ENCODE measurements at regions of chr22 and their contacts with region 1.

Region 1: DNA sequence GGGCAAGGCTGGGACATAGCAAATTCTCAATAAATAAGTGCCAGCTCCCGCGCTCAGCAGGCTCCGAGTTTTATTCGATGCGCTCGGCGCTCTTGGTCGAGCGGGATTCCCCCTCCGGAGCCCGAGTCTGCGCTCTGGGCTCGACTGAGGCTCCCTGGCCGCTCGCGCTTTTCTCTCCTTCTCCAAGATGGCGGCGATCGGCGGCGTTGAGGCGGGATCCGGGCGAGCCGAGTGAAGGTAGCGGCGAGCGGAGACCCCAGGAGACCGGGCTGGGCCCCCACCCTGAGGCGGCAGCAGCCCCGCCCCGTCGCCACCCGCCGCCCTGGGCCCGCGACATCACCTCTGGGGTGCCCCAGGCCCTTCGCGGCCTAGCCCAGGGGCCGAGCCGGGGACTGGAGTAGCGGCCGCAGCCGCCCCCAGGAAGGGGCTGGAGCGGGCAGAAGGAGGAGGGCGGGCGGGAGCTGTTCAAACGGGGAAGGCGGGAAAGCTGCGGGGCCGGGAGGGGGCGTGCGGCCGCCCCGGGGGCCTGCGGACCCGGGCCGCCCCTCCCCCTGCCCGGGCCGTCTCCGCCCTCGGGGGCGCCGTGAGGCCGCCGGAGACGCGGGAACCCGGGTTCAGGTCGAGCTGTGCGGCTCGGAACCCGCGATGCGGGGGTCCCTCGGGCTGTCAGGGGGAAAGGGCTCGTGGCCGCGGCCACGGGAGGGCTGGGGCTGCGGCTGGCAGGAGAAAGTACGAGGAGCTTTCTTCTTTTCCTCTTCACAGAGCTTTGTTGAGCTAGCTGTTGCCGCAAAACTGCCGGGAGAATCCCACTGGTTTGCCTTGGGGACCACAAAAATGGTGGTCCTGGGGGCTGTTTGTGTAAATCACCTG is at the start of gene HMGXB4:
- DNase-seq: peak; percentile 38
- ATAC-seq: peak; percentile 94
- H3K4me3 ChIP-seq: peak within 1 kb of the TSS; percentile 73
- H3K27ac ChIP-seq: peak within 1 kb of the TSS; percentile 74
- H3K4me1 ChIP-seq: 0 out of 2 replicates have a peak, but pooled peaks cover 5% of the 10 kb centered on the region
- H3K27me3 ChIP-seq: no peaks in the 10 kb centered on the region
- CTCF ChIP-seq: no peak
- EP300 ChIP-seq: no peak
- POLR2A ChIP-seq: peak; percentile 75
- RAD21 ChIP-seq: no peak
- polyA plus RNA-seq, gene HMGXB4: 32.1 to 44.5 TPM

Region 2: DNA sequence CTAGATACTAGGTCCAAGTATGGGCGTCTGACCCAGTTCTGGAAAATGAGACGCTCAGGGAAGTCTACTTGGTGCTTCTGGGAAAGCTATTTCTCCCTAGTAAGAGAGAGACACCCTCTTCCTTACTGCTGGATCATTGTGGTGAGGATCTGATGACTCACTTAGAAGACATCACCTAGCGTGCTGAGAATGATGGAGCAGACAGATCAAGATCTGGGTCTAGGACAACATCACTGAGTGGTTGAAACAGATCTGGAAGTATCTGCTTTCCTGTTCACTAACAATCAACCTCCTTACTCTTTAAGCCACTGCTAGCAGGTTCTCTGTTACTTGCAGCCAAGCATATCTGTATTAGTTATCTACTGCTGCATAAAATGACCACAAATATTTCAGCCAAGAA is 38.5 kb before region 1 on chr22:
- CTCF ChIA-PET with region 1: no interaction called
- POLR2A ChIA-PET with region 1: no interaction called
- RAD21 ChIA-PET with region 1: no interaction called
- SMC1A ChIA-PET with region 1: no interaction called
- in situ Hi-C with region 1: no loop called
- intact Hi-C with region 1: no loop called
- DNase-seq: no peak
- ATAC-seq: no peak
- H3K4me3 ChIP-seq: no peak overlapping the region
- H3K27ac ChIP-seq: no peak overlapping the region
- H3K4me1 ChIP-seq: no peaks in the 10 kb centered on the region
- H3K27me3 ChIP-seq: no peaks in the 10 kb centered on the region
- CTCF ChIP-seq: no peak
- EP300 ChIP-seq: no peak
- POLR2A ChIP-seq: no peak
- RAD21 ChIP-seq: no peak

Region 3: GRCh38 chr22:35306350-35306967 is 48.9 kb after region 1 on chr22:
- CTCF ChIA-PET with region 1: interaction called, 3 read pairs
- POLR2A ChIA-PET with region 1: interaction called, 7 read pairs
- RAD21 ChIA-PET with region 1: interaction called, 5 read pairs
- SMC1A ChIA-PET with region 1: interaction called, 10 read pairs
- in situ Hi-C with region 1: no loop called
- intact Hi-C with region 1: loop called (anchors 5 kb)
- DNase-seq: no peak
- ATAC-seq: 0 out of 3 replicates have a peak, but pooled peaks have one; percentile 1
- H3K4me3 ChIP-seq: no peak overlapping the region
- H3K27ac ChIP-seq: peak overlapping the region; percentile 7; the same call in 1 of the 2 replicates
- H3K4me1 ChIP-seq: peaks cover 46% of the 10 kb centered on the region
- H3K27me3 ChIP-seq: no peaks in the 10 kb centered on the region
- CTCF ChIP-seq: no peak
- EP300 ChIP-seq: no peak
- POLR2A ChIP-seq: no peak
- RAD21 ChIP-seq: no peak

Region 4: GRCh38 chr22:35312198-35313059 is 54.9 kb after region 1 on chr22:
- CTCF ChIA-PET with region 1: interaction called, 3 read pairs
- POLR2A ChIA-PET with region 1: interaction called, 7 read pairs
- RAD21 ChIA-PET with region 1: interaction called, 5 read pairs
- SMC1A ChIA-PET with region 1: interaction called, 10 read pairs
- in situ Hi-C with region 1: no loop called
- intact Hi-C with region 1: loop called (anchors 5 kb)
- DNase-seq: no peak
- ATAC-seq: no peak
- H3K4me3 ChIP-seq: no peak overlapping the region
- H3K27ac ChIP-seq: peak overlapping the region; percentile 72
- H3K4me1 ChIP-seq: peaks cover 61% of the 10 kb centered on the region
- H3K27me3 ChIP-seq: no peaks in the 10 kb centered on the region
- CTCF ChIP-seq: no peak
- EP300 ChIP-seq: no peak
- POLR2A ChIP-seq: no peak
- RAD21 ChIP-seq: no peak

Region 5: GRCh38 chr22:35611891-35612576 is 354.5 kb after region 1 on chr22:
- CTCF ChIA-PET with region 1: no interaction called
- POLR2A ChIA-PET with region 1: no interaction called
- RAD21 ChIA-PET with region 1: no interaction called
- SMC1A ChIA-PET with region 1: no interaction called
- in situ Hi-C with region 1: no loop called
- intact Hi-C with region 1: no loop called
- DNase-seq: peak; percentile 32
- ATAC-seq: peak; percentile 75
- H3K4me3 ChIP-seq: no peak overlapping the region
- H3K27ac ChIP-seq: no peak overlapping the region
- H3K4me1 ChIP-seq: peaks cover 10% of the 10 kb centered on the region; the same call in 1 of the 2 replicates
- H3K27me3 ChIP-seq: peaks cover 4 to 5% of the 10 kb centered on the region in 2 experiments; a peak in 3 of 4 replicates
- CTCF ChIP-seq: no peak
- EP300 ChIP-seq: no peak
- POLR2A ChIP-seq: no peak
- RAD21 ChIP-seq: no peak